K562 (cell line): ENCODE measurements at regions of chr1 and their contacts with region 1.

Region 1: GRCh38 chr1:228457396-228458176 is 29.6 kb upstream of the RNF187 start:
- DNase-seq: peak; percentile 98 to 100 (median 99)
- ATAC-seq: peak; percentile 91
- H3K4me3 ChIP-seq: peak overlapping the region; percentile 61
- H3K27ac ChIP-seq: peak overlapping the region; percentile 97
- H3K4me1 ChIP-seq: peaks cover 27 to 37% of the 10 kb centered on the region in 2 experiments
- H3K27me3 ChIP-seq: no peaks in the 10 kb centered on the region
- CTCF ChIP-seq: peak in 2 of 3 experiments; percentile 60 to 70
- EP300 ChIP-seq: no peak
- POLR2A ChIP-seq: peak; percentile 100
- RAD21 ChIP-seq: peak; percentile 61 to 72

Region 2: DNA sequence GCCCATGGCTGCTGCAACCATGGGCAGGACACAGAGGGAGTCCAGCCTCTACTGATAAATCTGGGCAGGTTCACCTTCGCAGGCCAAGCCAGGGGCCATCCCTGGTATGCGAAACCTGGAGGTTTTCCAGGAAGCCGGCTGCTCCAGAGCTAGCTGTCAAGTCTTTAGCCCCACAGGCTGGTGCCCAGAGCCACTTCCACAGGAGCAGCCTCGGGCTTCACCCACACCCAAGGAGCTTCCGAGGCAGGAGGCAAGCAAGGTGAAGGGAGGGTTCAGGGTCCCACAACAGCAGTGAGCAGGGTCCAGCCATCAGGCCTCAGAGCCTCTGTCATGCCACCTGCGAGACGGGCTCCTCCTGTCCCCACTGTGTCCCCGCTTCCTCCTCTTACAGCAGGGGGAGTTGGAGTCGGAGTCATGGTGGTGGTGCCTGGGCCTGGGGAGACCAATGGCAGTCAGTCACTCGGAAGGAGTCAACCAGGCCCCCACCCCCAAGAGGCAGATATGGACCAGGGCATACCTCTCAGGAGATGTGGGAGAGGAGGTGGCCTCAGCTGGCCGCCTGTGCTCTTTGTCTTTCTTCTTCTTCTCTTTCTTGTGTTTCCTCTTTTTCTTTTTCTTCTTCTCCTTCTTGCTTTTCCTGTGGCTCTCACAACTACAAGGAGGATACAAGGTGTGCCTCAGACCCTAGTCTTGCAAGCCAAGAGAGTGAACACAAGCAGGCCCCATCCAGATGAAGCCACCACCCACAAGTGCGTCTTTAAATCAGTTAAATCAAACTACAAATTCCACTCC is 356.6 kb before region 1 on chr1:
- CTCF ChIA-PET with region 1: no interaction called
- POLR2A ChIA-PET with region 1: no interaction called
- in situ Hi-C with region 1: no loop called
- intact Hi-C with region 1: no loop called
- DNase-seq: peak in 2 of 4 experiments; percentile 18 to 42
- ATAC-seq: no peak
- H3K4me3 ChIP-seq: no peak overlapping the region
- H3K27ac ChIP-seq: 0 out of 3 replicates have a peak overlapping the region, but pooled peaks have one; percentile 3
- H3K4me1 ChIP-seq: peaks cover 15 to 64% of the 10 kb centered on the region in 2 experiments
- H3K27me3 ChIP-seq: no peaks in the 10 kb centered on the region
- CTCF ChIP-seq: no peak
- EP300 ChIP-seq: no peak
- POLR2A ChIP-seq: no peak
- RAD21 ChIP-seq: no peak

Region 3: DNA sequence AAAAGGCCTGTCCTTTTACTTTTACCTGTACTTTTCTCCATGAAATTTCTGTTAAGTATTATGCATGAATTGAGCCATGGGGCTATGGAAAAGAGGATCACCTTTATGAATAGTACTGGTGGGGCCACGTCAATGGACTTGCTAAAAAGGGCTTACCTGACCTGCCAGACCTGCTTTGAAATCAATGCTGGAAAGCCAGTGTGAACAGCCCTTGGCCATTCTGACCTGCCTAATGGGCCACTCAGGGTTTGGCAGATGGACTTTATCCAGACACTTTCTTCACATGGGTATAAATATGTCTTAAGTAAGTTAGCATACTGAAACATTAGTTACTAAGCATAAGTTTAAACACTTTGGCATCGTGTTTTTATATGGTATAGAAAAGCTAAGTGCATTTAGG is 325.8 kb before region 1 on chr1:
- CTCF ChIA-PET with region 1: interaction called, 3 read pairs
- POLR2A ChIA-PET with region 1: no interaction called
- in situ Hi-C with region 1: no loop called
- intact Hi-C with region 1: loop called (anchors 2 kb)
- DNase-seq: no peak
- ATAC-seq: no peak
- H3K4me3 ChIP-seq: no peak overlapping the region
- H3K27ac ChIP-seq: no peak overlapping the region
- H3K4me1 ChIP-seq: peaks cover 3 to 6% of the 10 kb centered on the region in 2 experiments; a peak in 3 of 5 replicates
- H3K27me3 ChIP-seq: no peaks in the 10 kb centered on the region
- CTCF ChIP-seq: no peak
- EP300 ChIP-seq: no peak
- POLR2A ChIP-seq: no peak
- RAD21 ChIP-seq: no peak

Region 4: GRCh38 chr1:228340686-228341449 is 116.7 kb before region 1 on chr1:
- CTCF ChIA-PET with region 1: no interaction called
- POLR2A ChIA-PET with region 1: interaction called, 5 read pairs
- in situ Hi-C with region 1: loop called (anchors 10 kb)
- intact Hi-C with region 1: loop called (anchors 1 kb)
- DNase-seq: peak; percentile 82 to 88 (median 86)
- ATAC-seq: peak; percentile 88
- H3K4me3 ChIP-seq: peak overlapping the region; percentile 10; the same call in 1 of the 2 replicates
- H3K27ac ChIP-seq: no peak overlapping the region
- H3K4me1 ChIP-seq: peaks cover 5 to 59% of the 10 kb centered on the region in 2 experiments; a peak in 3 of 5 replicates
- H3K27me3 ChIP-seq: peaks cover 0 to 29% of the 10 kb centered on the region in 2 experiments; a peak in 3 of 5 replicates
- CTCF ChIP-seq: peak; percentile 79 to 88 (median 80)
- EP300 ChIP-seq: peak; percentile 77
- POLR2A ChIP-seq: no peak
- RAD21 ChIP-seq: peak; percentile 79 to 88

Region 5: DNA sequence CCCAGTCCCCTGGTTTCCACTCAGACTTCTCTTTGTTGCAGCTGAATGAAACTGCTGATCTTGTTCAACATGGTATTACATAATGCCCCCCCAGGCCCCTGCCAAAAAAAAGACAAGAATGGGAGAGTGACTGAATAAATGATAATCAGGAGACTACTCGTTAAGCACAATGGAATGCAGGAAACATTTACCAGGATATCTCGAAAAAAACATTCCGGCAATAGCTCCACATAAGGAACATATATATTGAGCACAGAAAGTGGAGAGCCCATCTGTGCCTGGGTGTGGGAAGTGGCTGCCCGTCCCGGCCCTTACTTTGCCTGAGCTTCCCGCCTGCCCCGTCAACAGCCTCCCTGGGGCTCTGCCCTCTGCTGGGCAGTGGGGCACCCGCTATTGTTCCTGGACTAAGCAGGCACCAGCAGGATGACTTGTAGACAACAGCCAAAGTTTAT is 64.3 kb before region 1 on chr1:
- CTCF ChIA-PET with region 1: no interaction called
- POLR2A ChIA-PET with region 1: interaction called, 16 read pairs
- in situ Hi-C with region 1: no loop called
- intact Hi-C with region 1: no loop called
- DNase-seq: no peak
- ATAC-seq: peak; percentile 36
- H3K4me3 ChIP-seq: no peak overlapping the region
- H3K27ac ChIP-seq: no peak overlapping the region
- H3K4me1 ChIP-seq: peaks cover 11 to 39% of the 10 kb centered on the region in 2 experiments; a peak in 4 of 5 replicates
- H3K27me3 ChIP-seq: no peaks in the 10 kb centered on the region
- CTCF ChIP-seq: peak; percentile 47 to 54 (median 48); a peak in 4 of 6 replicates
- EP300 ChIP-seq: no peak
- POLR2A ChIP-seq: no peak
- RAD21 ChIP-seq: peak; percentile 21 to 38; a peak in 1 of 4 replicates

Region 6: DNA sequence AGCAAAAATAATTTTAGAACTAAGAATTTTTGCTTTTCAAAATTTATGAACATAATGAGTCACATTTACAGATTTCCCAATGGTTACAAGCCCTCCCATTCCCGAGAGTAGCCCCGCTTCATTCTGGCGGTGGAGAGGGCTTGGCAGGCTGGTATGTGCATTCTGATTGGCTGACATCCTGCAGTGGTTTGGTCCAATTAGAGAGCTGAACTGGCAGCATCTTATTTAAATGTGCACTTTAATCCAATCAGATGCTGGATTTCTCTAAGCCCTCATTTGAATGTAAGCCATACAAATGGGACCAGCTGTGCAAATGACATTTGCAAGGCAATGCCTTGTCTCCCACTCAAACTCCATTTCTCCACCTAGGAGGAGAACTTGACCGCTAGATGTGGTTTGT is 22.9 kb before region 1 on chr1:
- CTCF ChIA-PET with region 1: no interaction called
- POLR2A ChIA-PET with region 1: interaction called, 22 read pairs
- in situ Hi-C with region 1: no loop called
- intact Hi-C with region 1: no loop called
- DNase-seq: peak in 2 of 4 experiments; percentile 40 to 83
- ATAC-seq: peak; percentile 80
- H3K4me3 ChIP-seq: no peak overlapping the region
- H3K27ac ChIP-seq: no peak overlapping the region
- H3K4me1 ChIP-seq: peaks cover 0 to 3% of the 10 kb centered on the region in 2 experiments; a peak in 2 of 5 replicates
- H3K27me3 ChIP-seq: peaks cover 13 to 24% of the 10 kb centered on the region in 2 experiments; a peak in 3 of 5 replicates
- CTCF ChIP-seq: no peak
- EP300 ChIP-seq: no peak
- POLR2A ChIP-seq: no peak
- RAD21 ChIP-seq: no peak

Region 7: DNA sequence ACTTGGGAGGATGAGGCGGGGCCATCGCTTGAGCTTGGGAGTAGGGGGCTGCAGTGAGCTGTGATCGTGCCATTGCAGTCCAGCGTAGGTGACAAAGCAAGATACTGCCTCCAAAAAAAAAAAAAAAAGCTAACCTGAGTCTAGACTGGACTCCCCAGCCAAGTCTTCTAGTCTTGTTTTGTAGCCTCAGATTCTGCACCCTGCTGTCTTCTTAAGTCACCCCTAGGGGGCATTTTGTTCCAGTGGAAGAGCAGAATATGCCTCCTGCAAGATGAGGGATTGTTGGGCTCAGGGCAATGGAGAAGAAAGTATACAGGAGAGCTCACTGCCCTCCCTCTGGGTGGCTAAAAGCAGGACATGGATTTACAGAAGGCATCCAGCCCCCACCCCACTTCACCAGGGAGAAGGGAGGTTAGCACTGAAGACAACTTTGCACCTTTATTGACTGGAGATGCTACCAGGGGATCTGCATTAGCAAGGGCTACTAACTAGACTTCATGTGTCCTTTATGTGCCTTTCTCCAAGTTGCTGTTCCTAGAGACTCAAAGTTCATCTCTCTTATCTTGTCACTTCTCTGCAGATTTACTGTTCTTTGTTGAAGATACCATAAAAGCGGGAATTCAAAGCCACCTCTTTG is 14.3 kb after region 1 on chr1:
- CTCF ChIA-PET with region 1: interaction called, 10 read pairs
- POLR2A ChIA-PET with region 1: interaction called, 15 read pairs
- in situ Hi-C with region 1: no loop called
- intact Hi-C with region 1: no loop called
- DNase-seq: peak; percentile 65 to 79 (median 70)
- ATAC-seq: peak; percentile 93
- H3K4me3 ChIP-seq: no peak overlapping the region
- H3K27ac ChIP-seq: no peak overlapping the region
- H3K4me1 ChIP-seq: peaks cover 19 to 23% of the 10 kb centered on the region in 2 experiments
- H3K27me3 ChIP-seq: peaks cover 0 to 11% of the 10 kb centered on the region in 2 experiments; a peak in 3 of 5 replicates
- CTCF ChIP-seq: peak; percentile 82 to 89 (median 84)
- EP300 ChIP-seq: no peak
- POLR2A ChIP-seq: no peak
- RAD21 ChIP-seq: peak; percentile 66 to 80

Region 8: DNA sequence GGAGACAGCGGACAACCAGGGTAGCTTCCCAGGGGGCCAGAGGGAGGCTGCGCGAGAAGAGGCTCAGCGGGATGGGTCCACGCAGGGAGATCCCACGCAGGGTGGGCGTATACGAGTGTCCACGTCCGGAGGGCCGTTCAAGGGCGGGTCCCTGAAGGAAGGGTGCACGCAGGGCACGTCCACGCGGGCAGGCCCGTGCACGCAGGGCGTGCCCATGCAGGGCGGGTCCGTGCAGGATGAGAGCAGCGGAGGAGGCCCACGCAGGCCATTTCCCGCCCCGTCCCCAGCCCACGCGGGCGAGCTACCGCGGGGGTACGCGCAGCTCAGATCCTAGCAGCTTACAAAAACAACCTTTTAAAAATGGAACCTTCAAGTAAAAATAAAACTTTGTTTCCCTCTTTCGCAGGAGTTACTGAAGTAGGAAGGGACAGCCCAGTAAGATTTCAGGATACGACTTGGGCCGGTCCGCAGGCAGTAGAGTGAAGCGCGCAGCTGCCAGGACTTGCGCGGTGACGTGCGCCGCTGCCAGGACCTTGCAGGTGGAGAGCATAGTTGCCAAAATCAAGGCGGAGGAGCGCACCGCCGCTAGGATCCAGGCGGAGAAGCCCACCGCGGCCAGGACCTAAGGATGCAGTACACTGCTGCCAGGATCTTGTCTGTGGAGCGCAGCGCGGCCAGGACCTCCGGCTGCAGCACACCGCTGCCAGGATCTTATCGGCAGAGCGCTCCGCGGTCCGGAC is 29.2 kb after region 1 on chr1:
- CTCF ChIA-PET with region 1: interaction called, 3 read pairs
- POLR2A ChIA-PET with region 1: interaction called, 64 read pairs
- in situ Hi-C with region 1: no loop called
- intact Hi-C with region 1: loop called (anchors 2 kb)
- DNase-seq: peak; percentile 73 to 92 (median 76)
- ATAC-seq: peak; percentile 58
- H3K4me3 ChIP-seq: peak overlapping the region; percentile 75
- H3K27ac ChIP-seq: peak overlapping the region; percentile 97
- H3K4me1 ChIP-seq: peaks cover 37 to 46% of the 10 kb centered on the region in 2 experiments
- H3K27me3 ChIP-seq: no peaks in the 10 kb centered on the region
- CTCF ChIP-seq: no peak
- EP300 ChIP-seq: no peak
- POLR2A ChIP-seq: peak; percentile 62; the same call in 1 of the 2 replicates
- RAD21 ChIP-seq: 0 out of 4 replicates have a peak, but pooled peaks of 1 of the 2 experiments have one; percentile 4

Region 9: DNA sequence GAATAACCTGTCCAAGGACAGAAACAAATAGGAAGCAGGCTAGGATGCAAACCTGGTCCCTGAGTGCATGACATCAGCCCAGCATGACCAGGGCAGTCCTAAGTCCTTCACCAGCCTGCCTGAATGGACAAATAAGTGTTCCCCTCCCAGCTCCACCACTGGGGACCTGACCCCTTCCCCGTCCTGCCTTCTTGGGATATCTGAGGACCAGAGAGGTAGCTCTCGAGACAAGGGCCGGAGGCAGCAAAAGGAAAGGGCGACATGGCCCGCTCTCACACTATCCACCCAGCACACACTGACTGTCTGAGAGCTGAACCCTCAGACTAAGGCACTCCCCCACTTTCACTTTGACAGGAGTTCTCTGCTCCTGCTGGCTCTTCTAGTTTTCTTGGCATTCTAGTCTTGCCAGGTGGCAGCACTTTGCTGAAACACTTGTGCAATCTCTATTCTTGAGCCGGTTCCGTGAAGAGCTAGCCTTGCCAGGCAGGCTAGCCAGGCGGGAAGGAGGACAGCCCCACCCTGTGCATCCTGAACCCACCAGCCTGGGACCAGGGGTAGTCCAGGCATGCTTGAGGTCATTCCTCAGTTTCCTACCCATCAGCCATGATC is 562.2 kb after region 1 on chr1:
- CTCF ChIA-PET with region 1: no interaction called
- POLR2A ChIA-PET with region 1: no interaction called
- in situ Hi-C with region 1: no loop called
- intact Hi-C with region 1: no loop called
- DNase-seq: no peak
- ATAC-seq: no peak
- H3K4me3 ChIP-seq: no peak overlapping the region
- H3K27ac ChIP-seq: no peak overlapping the region
- H3K4me1 ChIP-seq: peaks cover 5 to 6% of the 10 kb centered on the region in 2 experiments; a peak in 4 of 5 replicates
- H3K27me3 ChIP-seq: peaks cover 6 to 40% of the 10 kb centered on the region in 2 experiments; a peak in 4 of 5 replicates
- CTCF ChIP-seq: no peak
- EP300 ChIP-seq: no peak
- POLR2A ChIP-seq: no peak
- RAD21 ChIP-seq: no peak